ENCODE measurements at regions of chr19 and their contacts with region 1.

Region 1: GRCh38 chr19:19821366-19821951 is at the start of gene ZNF506:
- H3K4me3 Mint-ChIP-seq: peak within 1 kb of the TSS; percentile 97
- H3K27ac Mint-ChIP-seq: peak within 1 kb of the TSS; percentile 98
- H3K4me1 Mint-ChIP-seq: peaks cover 8% of the 10 kb centered on the region
- H3K27me3 Mint-ChIP-seq: no peaks in the 10 kb centered on the region

Region 2: DNA sequence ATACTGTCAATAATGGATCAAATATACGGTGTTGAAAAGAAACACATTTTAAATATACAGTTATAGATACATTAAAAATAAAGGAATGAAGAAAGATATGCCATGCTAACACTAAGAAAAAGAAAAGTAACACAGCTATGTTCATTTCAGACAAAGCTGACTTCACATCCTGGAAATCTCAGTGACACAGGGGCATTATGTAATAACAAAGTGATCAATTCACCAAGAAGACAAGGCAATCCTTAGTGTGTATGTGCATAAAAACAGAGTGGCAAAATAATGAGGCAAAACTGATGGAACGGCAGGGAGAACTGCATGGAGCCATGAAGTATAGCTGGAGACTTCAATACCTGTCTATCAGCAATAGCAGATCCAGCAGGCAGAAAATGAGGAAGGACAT is 101.7 kb before region 1 on chr19:
- intact Hi-C with region 1: loop called (anchors 10 kb)
- H3K4me3 Mint-ChIP-seq: no peak overlapping the region
- H3K27ac Mint-ChIP-seq: no peak overlapping the region
- H3K4me1 Mint-ChIP-seq: no peaks in the 10 kb centered on the region
- H3K27me3 Mint-ChIP-seq: no peaks in the 10 kb centered on the region

Region 3: DNA sequence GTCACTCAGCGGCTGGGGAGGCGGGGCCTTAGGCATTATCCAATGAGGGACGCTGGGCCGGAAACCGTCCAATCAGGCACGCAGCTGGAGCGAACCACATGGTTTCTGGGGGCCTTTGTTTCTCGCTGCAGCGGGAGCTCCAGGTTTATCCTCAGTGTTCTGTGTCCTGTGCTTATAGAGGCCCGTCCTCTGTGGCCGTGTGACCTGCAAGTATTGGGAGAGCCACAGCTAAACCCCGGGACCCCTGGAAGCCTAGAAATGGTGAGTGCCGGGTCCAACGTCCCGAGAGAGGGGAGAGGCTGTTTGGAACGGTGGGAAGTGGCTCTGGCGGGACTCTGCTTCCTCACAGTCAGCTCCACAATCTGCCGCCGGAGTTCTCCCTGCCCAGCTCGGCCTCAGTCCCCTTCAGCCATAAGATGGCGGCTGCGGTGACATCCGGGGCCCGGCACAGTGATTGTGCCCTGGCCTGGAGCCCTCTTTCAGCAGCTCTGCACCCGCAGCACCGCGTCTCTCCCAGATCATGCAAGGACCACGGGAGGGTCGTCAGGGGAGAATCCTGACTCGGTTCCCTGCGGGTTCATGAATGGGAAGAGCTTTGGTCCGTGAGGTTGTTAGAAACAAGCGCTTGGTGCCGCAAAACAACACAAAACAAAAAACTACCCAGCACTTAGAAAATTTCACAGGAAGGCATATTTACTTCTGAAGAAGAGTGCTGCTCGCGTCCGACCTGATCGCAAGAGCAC is 44.5 kb after region 1 on chr19 and contains the start of gene ZNF253:
- intact Hi-C with region 1: loop called (anchors 5 kb)
- H3K4me3 Mint-ChIP-seq: peak within 1 kb of the TSS; percentile 85
- H3K27ac Mint-ChIP-seq: peak within 1 kb of the TSS; percentile 99
- H3K4me1 Mint-ChIP-seq: peaks cover 12% of the 10 kb centered on the region
- H3K27me3 Mint-ChIP-seq: peaks cover under 1% of the 10 kb centered on the region

Measured in dendritic cell treated with granulocyte-macrophage colony-stimulating factor and Interleukin-4, amounts not matched to agents 40 ng/mL and 50 ng/mL, for 4 days (primary cell).